ENCODE measurements at regions of chr16 and their contacts with region 1.

Region 1: GRCh38 chr16:72066747-72067146 is 3.7 kb downstream of the HPR start:
- DNase-seq: peak; percentile 16
- H3K4me3 ChIP-seq: no peak overlapping the region
- H3K27ac ChIP-seq: no peak overlapping the region
- H3K27me3 ChIP-seq: no peaks in the 10 kb centered on the region
- CTCF ChIP-seq: peak; percentile 66

Region 2: GRCh38 chr16:72093448-72094265 is 26.9 kb after region 1 on chr16 and contains the starts of genes DHX38 and TXNL4B:
- CTCF ChIA-PET with region 1: interaction called, 41 read pairs
- POLR2A ChIA-PET with region 1: no interaction called
- DNase-seq: peak; percentile 97
- H3K4me3 ChIP-seq: peak within 1 kb of the TSS; percentile 98
- H3K27ac ChIP-seq: peak within 1 kb of the TSS; percentile 77
- H3K27me3 ChIP-seq: no peaks in the 10 kb centered on the region
- CTCF ChIP-seq: peak; percentile 2; the same call in 1 of the 2 replicates
- polyA plus RNA-seq, gene DHX38: 26.8 and 31.1 TPM in 2 replicates
- polyA plus RNA-seq, gene TXNL4B: 11.3 and 21.3 TPM in 2 replicates

Region 3: GRCh38 chr16:72099377-72099818 is 32.7 kb after region 1 on chr16:
- CTCF ChIA-PET with region 1: interaction called, 41 read pairs
- POLR2A ChIA-PET with region 1: no interaction called
- DNase-seq: no peak
- H3K4me3 ChIP-seq: no peak overlapping the region
- H3K27ac ChIP-seq: no peak overlapping the region
- H3K27me3 ChIP-seq: no peaks in the 10 kb centered on the region
- CTCF ChIP-seq: peak; percentile 56

Region 4: GRCh38 chr16:72203401-72203800 is 136.7 kb after region 1 on chr16:
- CTCF ChIA-PET with region 1: no interaction called
- POLR2A ChIA-PET with region 1: no interaction called
- DNase-seq: no peak
- H3K4me3 ChIP-seq: no peak overlapping the region
- H3K27ac ChIP-seq: no peak overlapping the region
- H3K27me3 ChIP-seq: no peaks in the 10 kb centered on the region
- CTCF ChIP-seq: no peak